ENCODE measurements at regions of chr14 and their contacts with region 1.

Region 1: DNA sequence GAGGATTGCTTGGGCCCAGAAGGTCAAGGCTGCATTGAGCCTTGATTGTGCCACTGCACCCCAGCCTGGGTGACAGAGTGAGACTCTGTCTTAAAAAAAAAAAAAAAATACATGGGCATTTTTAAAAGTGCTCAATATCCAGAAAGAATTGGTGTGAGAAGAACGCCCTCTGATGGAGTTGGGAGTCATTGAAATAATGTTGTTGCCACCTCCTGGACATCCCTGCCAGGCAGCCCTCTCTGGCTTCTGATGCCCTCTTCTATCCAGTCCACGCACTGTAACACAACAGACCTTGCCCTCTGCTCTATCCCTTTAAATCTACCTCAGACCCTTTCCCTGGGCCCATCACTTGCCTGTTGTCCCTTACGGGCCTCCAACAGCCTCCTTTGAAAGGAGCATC is 4.9 kb downstream of the PTGDR start:
- DNase-seq: peak; percentile 67
- H3K4me3 Mint-ChIP-seq: no peak overlapping the region
- H3K27ac Mint-ChIP-seq: no peak overlapping the region
- H3K4me1 Mint-ChIP-seq: peaks cover 8% of the 10 kb centered on the region
- H3K27me3 Mint-ChIP-seq: no peaks in the 10 kb centered on the region
- CTCF ChIP-seq: peak; percentile 41

Region 2: DNA sequence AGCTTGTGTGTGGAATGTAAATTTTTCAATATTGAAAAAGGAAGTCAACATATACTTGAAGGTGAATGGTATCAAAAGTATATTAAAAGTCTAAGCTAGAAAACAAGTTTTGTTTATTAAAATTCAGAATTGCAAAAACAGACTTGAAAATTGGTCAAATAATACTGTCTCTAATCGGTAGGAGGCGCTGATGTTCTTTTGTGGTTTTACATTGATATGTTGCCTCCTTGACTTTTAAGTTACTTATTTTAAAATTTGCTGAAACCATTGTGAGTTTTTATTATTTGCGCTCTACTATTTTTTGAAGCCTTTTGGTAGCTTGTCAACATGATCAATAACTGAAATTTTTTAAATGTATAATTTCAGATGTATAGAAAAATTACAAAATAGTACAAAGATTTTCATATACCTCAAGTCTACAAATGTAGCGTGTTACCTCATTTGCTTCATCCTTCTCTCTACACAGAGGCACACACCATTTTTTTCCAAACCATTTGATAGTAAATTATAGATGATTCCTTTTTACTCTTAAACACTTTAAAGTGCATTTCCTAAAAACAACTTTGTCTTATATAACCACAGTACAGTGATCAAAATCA is 276.1 kb before region 1 on chr14:
- CTCF ChIA-PET with region 1: no interaction called
- POLR2A ChIA-PET with region 1: no interaction called
- intact Hi-C with region 1: loop called (anchors 1 kb)
- DNase-seq: peak; percentile 51
- H3K4me3 Mint-ChIP-seq: no peak overlapping the region
- H3K27ac Mint-ChIP-seq: peak overlapping the region; percentile 85
- H3K4me1 Mint-ChIP-seq: peaks cover 26% of the 10 kb centered on the region
- H3K27me3 Mint-ChIP-seq: no peaks in the 10 kb centered on the region
- CTCF ChIP-seq: peak; percentile 47

Region 3: DNA sequence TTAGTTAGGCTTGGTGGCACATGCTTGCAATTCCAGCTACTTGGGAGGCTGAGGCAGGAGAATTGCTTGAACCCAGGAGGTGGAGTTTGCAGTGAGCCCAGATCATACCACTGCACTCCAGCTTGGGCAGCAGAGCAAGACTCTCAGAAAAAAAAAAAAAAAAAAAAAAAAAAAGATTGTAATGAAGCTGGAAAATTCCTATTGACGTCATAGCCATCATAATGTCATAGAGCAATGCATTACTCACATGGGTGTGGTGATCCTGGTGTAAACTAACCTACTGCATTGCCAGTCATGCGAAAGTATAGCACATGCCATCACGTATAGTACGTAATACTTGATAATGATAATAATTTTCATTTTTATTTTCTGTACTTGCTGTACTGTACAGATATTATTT is 160.8 kb before region 1 on chr14:
- CTCF ChIA-PET with region 1: no interaction called
- POLR2A ChIA-PET with region 1: no interaction called
- intact Hi-C with region 1: no loop called
- DNase-seq: peak; percentile 46
- H3K4me3 Mint-ChIP-seq: no peak overlapping the region
- H3K27ac Mint-ChIP-seq: no peak overlapping the region
- H3K4me1 Mint-ChIP-seq: no peaks in the 10 kb centered on the region
- H3K27me3 Mint-ChIP-seq: no peaks in the 10 kb centered on the region
- CTCF ChIP-seq: no peak

Region 4: DNA sequence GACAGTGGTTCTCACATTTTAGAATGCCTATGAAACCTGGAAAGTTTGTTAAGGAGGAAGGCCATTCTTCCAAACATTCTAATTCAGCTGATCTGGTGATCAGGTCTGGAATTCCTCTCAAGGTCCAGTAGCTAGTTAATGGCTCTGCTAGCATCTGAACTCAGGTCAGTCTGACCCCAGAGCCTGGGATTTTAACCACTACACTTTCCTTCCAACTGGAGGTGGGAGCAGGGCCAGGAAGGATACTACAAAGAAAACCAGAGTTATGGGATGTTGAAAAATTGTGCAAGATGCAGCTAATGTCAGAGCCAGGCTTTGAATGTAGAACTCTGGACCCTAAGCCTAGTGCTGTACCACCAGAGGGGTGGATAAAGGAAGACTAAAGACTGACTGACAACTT is 129.9 kb before region 1 on chr14:
- CTCF ChIA-PET with region 1: interaction called, 4 read pairs
- POLR2A ChIA-PET with region 1: no interaction called
- intact Hi-C with region 1: loop called (anchors 5 kb)
- DNase-seq: no peak
- H3K4me3 Mint-ChIP-seq: no peak overlapping the region
- H3K27ac Mint-ChIP-seq: no peak overlapping the region
- H3K4me1 Mint-ChIP-seq: no peaks in the 10 kb centered on the region
- H3K27me3 Mint-ChIP-seq: peaks cover under 1% of the 10 kb centered on the region
- CTCF ChIP-seq: no peak